ENCODE measurements at regions of chr3 and their contacts with region 1.

Region 1: DNA sequence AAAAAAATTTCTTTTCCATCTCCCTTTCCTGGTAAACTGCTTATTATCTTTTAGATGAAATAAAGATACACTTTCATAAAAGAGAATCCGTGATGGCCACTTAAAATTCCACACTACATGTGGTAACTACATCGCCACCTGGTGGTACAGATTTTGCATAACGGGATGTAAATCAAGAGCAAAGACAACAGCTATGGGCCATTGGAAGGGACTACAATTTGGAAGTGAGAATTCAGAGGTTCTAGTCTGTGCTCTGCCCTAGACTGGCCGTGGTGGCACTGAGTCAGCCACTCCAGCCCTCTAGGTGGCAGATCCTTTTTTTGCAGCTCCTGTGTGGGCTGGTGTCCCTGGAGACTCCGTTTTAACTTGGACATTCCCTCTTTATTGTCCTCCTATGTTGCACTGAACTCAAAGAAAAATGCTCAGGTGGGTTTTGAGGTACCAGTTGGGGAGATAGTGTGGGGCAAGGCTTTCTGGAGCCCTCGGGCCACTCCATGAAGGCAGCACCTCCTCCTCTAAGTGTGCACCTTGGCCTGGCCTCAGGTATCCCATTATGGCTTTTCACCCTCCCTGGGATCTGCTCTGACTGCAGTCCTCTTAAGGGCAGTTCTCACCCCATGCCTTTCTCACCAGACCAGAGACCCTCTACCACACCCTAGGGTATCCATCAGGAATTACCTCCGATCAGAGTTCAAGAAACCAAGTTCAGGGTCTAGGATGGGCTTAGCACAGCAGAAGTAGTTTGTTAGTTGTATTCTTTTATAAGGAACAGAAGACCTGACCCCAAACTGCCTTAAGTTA is 54.9 kb downstream of the SPSB4 start:
- DNase-seq: peak; percentile 71 to 94 (median 81)
- H3K4me3 ChIP-seq: no peak overlapping the region
- H3K27ac ChIP-seq: no peak overlapping the region
- H3K4me1 ChIP-seq: no peaks in the 10 kb centered on the region
- H3K27me3 ChIP-seq: no peaks in the 10 kb centered on the region
- CTCF ChIP-seq: peak; percentile 58 to 84 (median 78)
- POLR2A ChIP-seq: no peak

Region 2: DNA sequence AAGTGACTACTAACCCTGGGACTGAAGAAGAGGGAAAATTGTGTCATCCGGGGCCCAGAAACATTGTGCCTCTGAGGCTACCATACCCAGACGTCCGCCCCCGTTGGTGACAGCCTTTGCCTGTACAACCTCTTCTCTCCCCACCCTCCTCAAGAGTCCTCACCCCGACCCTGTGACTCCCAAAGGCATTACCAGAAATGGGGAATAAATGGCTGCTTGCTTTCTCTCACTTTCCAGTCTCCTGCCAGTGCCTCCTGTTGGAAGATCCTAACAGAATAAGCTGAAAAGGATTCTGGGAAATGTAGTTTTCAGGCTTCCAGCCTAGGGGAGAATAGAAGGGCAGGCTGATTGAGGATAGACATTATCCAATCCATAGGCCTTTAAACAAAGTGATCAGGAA is 195.2 kb before region 1 on chr3:
- intact Hi-C with region 1: loop called in 1 of 2 experiments (anchors 10 kb)
- DNase-seq: peak in 4 of 7 donors; percentile 11 to 28 (median 18)
- H3K4me3 ChIP-seq: peak overlapping the region in 1 of 4 donors; percentile 39
- H3K27ac ChIP-seq: no peak overlapping the region
- H3K4me1 ChIP-seq: no peaks in the 10 kb centered on the region
- H3K27me3 ChIP-seq: no peaks in the 10 kb centered on the region
- CTCF ChIP-seq: no peak
- POLR2A ChIP-seq: no peak

Region 3: GRCh38 chr3:141000027-141000663 is 105.9 kb before region 1 on chr3:
- intact Hi-C with region 1: loop called (anchors 5 kb)
- DNase-seq: peak; percentile 52 to 86 (median 67)
- H3K4me3 ChIP-seq: no peak overlapping the region
- H3K27ac ChIP-seq: no peak overlapping the region
- H3K4me1 ChIP-seq: no peaks in the 10 kb centered on the region
- H3K27me3 ChIP-seq: no peaks in the 10 kb centered on the region
- CTCF ChIP-seq: peak; percentile 38 to 75 (median 64)
- POLR2A ChIP-seq: no peak

Measured in adrenal gland (tissue), 19 donors.